Natural killer cell (primary cell): ENCODE measurements at regions of chr11 and their contacts with region 1.

Region 1: DNA sequence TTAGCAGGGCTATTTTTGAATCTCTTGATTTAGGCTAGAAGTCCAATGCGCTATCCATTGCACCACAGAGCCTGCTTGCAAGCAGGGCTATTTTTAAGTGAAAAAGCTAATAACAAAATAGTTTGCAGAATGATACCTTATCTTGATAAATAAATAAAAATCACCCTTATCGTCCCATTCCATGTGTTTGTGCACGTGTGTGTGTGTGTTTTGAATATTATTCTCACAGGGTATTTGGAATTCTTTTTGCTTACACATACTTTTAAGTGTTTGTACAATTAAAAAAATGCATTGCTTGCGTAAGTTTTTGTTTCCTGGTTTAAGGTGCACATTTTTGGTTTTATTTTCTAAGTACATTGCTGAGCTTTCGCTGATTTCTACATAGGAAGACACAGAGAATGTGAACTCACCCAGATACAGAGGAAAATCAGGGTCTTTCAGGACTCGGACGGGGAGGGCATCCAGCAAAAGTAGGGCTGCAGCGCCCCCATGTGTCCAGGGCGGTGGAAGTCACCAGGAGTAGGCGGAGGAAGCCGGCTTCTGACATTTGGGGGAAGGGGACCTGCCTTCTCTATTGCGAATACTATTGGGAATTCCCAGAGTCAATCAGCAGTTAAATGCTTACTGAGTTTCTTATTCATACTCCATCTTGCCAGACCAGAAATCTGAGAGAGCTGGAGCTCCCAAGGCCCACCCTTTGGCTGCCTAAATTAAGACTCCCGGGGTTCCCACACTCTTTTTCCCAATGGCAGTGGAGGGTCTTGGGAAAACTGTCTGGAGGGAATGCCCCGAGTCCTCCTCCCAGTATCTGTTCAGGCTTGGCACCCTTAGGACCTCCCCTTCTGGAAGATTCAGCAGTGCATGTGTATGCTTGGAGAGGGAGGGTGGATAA is 27.2 kb downstream of the SLC1A2 start:
- DNase-seq: peak; percentile 73 to 90
- ATAC-seq: peak; percentile 70 to 90 (median 84)
- H3K4me3 ChIP-seq: no peak overlapping the region
- H3K4me3 Mint-ChIP-seq: no peak overlapping the region
- H3K27ac ChIP-seq: no peak overlapping the region
- H3K27ac Mint-ChIP-seq: no peak overlapping the region
- H3K4me1 ChIP-seq: no peaks in the 10 kb centered on the region
- H3K4me1 Mint-ChIP-seq: peaks cover 5% of the 10 kb centered on the region in 2 donors
- H3K27me3 ChIP-seq: no peaks in the 10 kb centered on the region
- H3K27me3 Mint-ChIP-seq: peaks cover 14 to 16% of the 10 kb centered on the region in 2 donors
- CTCF ChIP-seq: peak; percentile 92

Region 2: GRCh38 chr11:34840736-34841386 is 551.3 kb before region 1 on chr11:
- intact Hi-C with region 1: loop called (anchors 2 kb)
- DNase-seq: peak in 1 of 2 donors; percentile 49
- ATAC-seq: peak; percentile 58 to 86 (median 64)
- H3K4me3 ChIP-seq: no peak overlapping the region
- H3K4me3 Mint-ChIP-seq: no peak overlapping the region
- H3K27ac ChIP-seq: no peak overlapping the region
- H3K27ac Mint-ChIP-seq: no peak overlapping the region
- H3K4me1 ChIP-seq: no peaks in the 10 kb centered on the region
- H3K4me1 Mint-ChIP-seq: no peaks in the 10 kb centered on the region
- H3K27me3 ChIP-seq: no peaks in the 10 kb centered on the region
- H3K27me3 Mint-ChIP-seq: peaks cover 13 to 43% of the 10 kb centered on the region in 2 donors
- CTCF ChIP-seq: peak; percentile 62

Region 3: DNA sequence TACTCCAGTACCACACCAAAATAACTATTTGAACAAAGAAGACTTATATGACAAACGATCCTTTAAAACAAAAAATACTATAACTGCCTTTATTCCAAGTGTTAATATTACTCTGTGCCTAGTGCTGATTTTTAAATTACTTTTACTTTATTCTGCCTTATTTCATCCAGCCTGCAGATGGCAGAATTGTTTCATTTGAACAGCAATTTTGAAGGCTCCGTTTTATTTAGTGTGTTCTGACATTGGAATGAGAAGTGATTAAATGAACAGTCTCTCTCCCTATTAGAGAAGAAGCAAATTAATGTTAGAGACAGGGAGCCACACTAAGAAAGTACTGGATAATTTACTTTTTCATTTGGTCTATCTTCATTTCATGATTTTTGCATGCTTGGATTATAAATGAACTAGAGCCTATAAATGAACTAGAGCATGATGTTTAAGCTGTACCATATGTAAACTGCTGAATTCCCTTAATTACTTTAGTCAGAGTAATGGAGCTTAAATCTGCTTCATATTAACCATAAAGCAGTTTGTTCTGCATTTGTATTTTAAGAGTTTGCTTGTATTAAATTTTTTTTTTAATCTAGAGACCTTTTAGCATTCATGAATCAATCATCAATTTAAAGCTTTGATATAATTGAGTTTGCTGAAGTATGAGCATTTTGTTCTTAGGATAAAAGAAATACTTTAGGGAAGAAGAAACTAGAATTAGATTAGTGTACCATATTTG is 465.9 kb before region 1 on chr11:
- intact Hi-C with region 1: loop called (anchors 1 kb)
- DNase-seq: peak in 1 of 2 donors; percentile 79
- ATAC-seq: peak; percentile 58 to 80 (median 77)
- H3K4me3 ChIP-seq: no peak overlapping the region
- H3K4me3 Mint-ChIP-seq: no peak overlapping the region
- H3K27ac ChIP-seq: no peak overlapping the region
- H3K27ac Mint-ChIP-seq: no peak overlapping the region
- H3K4me1 ChIP-seq: no peaks in the 10 kb centered on the region
- H3K4me1 Mint-ChIP-seq: peaks cover 7 to 21% of the 10 kb centered on the region in 2 donors
- H3K27me3 ChIP-seq: no peaks in the 10 kb centered on the region
- H3K27me3 Mint-ChIP-seq: no peaks in the 10 kb centered on the region
- CTCF ChIP-seq: peak; percentile 79

Region 4: GRCh38 chr11:35237860-35238715 is 154.1 kb before region 1 on chr11:
- intact Hi-C with region 1: loop called (anchors 5 kb)
- DNase-seq: peak in 1 of 2 donors; percentile 86
- ATAC-seq: peak in 2 of 3 donors; percentile 56 to 58
- H3K4me3 ChIP-seq: no peak overlapping the region
- H3K4me3 Mint-ChIP-seq: no peak overlapping the region
- H3K27ac ChIP-seq: no peak overlapping the region
- H3K27ac Mint-ChIP-seq: no peak overlapping the region
- H3K4me1 ChIP-seq: peaks cover 30% of the 10 kb centered on the region
- H3K4me1 Mint-ChIP-seq: peaks cover 45 to 47% of the 10 kb centered on the region in 2 donors
- H3K27me3 ChIP-seq: no peaks in the 10 kb centered on the region
- H3K27me3 Mint-ChIP-seq: peaks cover 3 to 13% of the 10 kb centered on the region in 2 donors
- CTCF ChIP-seq: peak; percentile 87